Sigmoid colon (tissue), 7 donors: ENCODE measurements at regions of chr19 and their contacts with region 1.

Region 1: DNA sequence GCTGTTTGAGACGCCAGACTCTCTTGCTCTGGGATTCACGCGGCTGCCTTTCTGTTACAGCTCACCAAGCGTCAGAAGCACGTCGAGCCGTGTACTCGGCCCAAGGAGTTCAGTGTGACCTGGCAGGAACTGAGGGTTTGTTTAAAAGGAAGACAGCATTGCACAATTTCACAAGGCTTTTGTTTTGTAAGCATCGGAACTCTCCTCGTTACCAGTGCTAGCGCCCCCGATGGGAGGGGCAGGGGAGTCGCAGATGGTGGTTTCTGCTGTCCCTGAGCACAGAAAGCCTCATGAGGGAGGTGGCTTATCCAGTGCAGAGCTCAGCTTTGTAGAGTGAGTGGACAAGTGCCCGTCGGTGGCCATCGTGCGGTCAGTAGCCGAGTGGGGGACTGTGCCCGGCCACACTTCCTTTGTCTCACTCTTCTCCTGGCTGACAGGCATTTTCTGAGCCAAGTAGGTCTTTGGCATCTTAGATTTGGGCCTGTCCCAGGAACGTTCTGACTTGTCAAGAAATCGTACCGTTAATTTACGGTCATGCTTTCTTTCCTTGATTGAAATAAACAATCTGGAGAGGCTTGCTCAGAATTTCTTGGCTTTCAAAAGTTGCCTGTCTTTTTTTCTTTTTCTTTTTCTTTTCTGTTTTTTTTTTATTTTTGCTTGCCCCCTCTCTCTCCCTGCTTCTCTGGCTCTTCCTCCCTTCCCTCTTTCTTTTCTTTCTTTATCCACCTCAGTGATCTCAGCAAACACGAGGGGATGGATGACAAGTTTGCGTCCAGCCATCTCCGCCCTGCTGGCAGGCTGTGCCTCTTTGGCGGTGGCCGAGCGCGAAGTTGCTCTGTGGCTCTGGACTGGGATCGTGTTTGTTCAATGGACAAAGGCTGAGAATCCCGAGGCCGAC is 7.7 kb downstream of the KDM4B start:
- DNase-seq: peak; percentile 98
- H3K4me3 ChIP-seq: peak overlapping the region; percentile 2 to 28 (median 4)
- H3K27ac ChIP-seq: peak overlapping the region; percentile 87 to 94 (median 90)
- H3K4me1 ChIP-seq: peaks cover 0 to 90% (median 80%) of the 10 kb centered on the region in 4 donors
- H3K27me3 ChIP-seq: no peaks in the 10 kb centered on the region
- CTCF ChIP-seq: peak in 2 of 4 experiments; percentile 47 to 49
- EP300 ChIP-seq: peak; percentile 89 to 97 (median 94)
- POLR2A ChIP-seq: no peak

Region 2: DNA sequence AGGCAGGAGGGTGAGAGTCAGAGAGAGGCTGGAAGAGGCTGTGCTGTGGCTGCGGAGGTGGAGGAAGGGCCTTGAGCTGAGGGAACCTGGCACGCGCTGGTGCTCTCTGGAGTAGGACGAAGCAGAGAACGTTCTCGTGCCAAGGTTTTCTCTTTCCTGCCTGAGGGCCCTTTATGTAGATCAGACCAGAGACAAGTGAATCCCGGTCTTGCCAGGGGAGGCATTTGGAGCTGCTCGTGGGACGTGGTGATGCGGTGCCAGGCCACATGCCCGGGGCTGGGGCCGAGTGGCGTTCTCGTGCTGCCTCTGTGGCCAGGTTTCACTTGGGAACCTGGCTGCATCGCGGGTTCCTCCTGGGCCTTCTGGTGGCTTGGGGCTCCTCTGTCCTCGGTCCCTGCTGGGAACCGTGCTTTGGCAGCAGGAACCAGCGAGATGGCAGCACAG is 46.5 kb after region 1 on chr19:
- intact Hi-C with region 1: loop called (anchors 5 kb)
- DNase-seq: peak; percentile 91
- H3K4me3 ChIP-seq: no peak overlapping the region
- H3K27ac ChIP-seq: peak overlapping the region; percentile 15 to 80 (median 77)
- H3K4me1 ChIP-seq: peaks cover 0 to 48% (median 35%) of the 10 kb centered on the region in 4 donors
- H3K27me3 ChIP-seq: no peaks in the 10 kb centered on the region
- CTCF ChIP-seq: no peak
- EP300 ChIP-seq: no peak
- POLR2A ChIP-seq: no peak

Region 3: DNA sequence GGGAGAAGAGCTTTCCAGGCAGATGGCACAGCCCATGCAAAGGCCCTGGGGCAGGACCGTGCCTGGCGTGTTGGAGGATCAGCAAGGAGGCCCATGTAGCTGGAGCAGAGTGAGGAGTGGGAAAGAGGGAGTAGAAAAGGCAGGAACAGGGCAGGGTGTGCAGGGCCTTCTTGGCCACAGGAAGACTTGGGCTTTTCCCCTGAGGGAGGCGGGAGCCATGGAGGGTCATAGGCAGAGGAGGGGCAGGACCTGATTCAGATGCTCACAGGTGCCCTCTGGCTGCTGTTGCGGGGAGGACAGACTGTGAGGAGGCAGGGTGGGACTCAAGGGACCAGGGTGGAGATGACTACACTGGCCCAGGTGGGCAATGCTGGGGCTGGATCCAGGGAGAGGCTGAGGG is 377.8 kb after region 1 on chr19:
- intact Hi-C with region 1: no loop called
- DNase-seq: no peak
- H3K4me3 ChIP-seq: no peak overlapping the region
- H3K27ac ChIP-seq: no peak overlapping the region
- H3K4me1 ChIP-seq: no peaks in the 10 kb centered on the region
- H3K27me3 ChIP-seq: peaks cover 4 to 53% (median 15%) of the 10 kb centered on the region in 3 donors
- CTCF ChIP-seq: no peak
- EP300 ChIP-seq: no peak
- POLR2A ChIP-seq: no peak

Region 4: DNA sequence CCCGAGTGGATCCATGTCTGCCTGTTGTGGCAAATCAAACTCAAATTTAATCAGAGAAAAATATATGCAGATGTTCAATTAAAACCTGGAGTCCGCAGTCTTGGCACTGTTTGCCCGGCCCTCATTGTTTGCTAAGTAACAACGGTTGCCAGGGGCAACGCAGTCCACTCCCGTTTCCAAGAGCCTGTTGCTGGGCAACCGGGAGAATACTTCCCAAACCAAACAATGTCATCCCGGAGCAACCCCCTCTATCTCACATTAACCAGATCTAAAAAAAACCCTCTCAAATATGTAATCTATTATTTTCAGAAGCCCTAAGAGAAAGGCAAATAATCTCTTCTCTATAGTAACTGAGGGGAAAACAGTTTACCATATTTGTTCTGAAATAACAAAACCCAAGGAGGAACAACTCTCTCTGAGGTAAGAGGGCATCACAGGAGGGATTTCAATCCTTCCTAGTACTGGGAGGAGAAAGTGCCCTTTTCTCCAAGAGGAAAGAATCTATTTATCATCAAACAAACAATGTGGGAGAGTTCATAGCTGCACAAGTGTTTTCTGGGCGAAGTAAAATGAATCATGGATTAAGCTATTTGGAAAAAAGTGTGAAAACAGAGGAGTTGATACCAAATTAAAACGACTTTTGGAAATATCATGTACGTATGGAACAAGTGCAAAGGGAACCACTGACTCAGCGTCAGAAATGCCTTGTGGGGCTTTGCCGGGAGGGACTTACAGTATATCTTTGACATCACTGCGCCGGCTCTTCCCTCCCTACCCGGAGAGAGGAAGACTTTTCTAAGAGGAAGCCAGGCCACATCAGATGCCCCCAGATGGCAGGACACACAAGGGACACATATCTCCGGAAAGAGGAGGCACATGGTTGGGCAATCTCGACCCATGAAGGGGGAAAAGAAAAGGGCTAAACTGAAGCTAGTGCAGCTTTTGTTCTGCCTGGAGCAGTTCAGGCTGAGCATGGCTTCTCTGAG is 1090.3 kb after region 1 on chr19:
- intact Hi-C with region 1: loop called (anchors 10 kb)
- DNase-seq: peak; percentile 97
- H3K4me3 ChIP-seq: peak overlapping the region in 1 of 4 donors; percentile 14
- H3K27ac ChIP-seq: peak overlapping the region; percentile 91 to 95 (median 92)
- H3K4me1 ChIP-seq: peaks cover 0 to 95% (median 85%) of the 10 kb centered on the region in 4 donors
- H3K27me3 ChIP-seq: no peaks in the 10 kb centered on the region
- CTCF ChIP-seq: no peak
- EP300 ChIP-seq: peak in 3 of 4 donors; percentile 21 to 88 (median 50)
- POLR2A ChIP-seq: no peak